ENCODE measurements at regions of chr6 and their contacts with region 1.

Region 1: GRCh38 chr6:33751771-33752645 is 5.3 kb upstream of the IP6K3 start:
- DNase-seq: no peak
- ATAC-seq: peak; percentile 27; the same call in 1 of the 2 replicates
- H3K4me3 ChIP-seq: no peak overlapping the region
- H3K27ac ChIP-seq: no peak overlapping the region
- H3K4me1 ChIP-seq: peaks cover 9% of the 10 kb centered on the region
- H3K27me3 ChIP-seq: no peaks in the 10 kb centered on the region
- CTCF ChIP-seq: no peak

Region 2: DNA sequence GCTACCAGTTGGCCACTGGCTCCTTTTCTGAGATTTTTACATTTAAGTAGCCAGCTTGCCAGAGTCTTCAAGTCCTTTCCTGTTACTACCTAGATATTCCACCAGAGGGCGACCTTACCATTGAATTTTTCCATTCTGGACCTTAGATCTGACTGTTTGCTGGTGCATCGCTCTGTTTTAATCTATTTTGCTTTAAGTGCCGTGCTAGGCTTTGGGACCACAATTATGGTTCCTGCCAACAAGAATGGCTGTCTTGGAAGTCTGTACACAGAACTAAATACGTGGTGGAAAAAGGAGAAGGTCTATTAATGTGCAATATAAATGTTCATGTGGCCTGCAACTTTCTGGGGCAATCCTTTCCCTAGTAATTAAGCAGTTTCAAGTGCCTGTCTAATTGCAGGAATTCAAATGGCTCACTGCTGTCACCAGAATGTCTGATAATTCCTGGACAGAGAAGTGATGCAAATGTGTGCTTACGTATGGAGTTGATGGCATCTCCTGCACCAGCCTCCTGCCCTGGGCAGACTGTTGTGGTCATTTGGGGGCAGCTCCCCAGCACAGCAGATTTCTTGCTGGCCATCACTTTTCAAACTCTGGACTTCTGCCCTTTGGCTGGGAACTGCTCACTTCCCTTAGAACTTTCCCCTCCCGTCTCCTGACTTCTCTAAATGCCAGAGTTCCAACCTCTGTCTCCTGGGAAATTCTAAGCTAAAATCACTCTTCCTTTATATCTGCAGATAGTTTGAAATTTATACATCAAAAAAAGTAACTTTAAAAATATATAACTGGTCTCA is 737.0 kb before region 1 on chr6:
- CTCF ChIA-PET with region 1: no interaction called
- POLR2A ChIA-PET with region 1: no interaction called
- in situ Hi-C with region 1: no loop called
- intact Hi-C with region 1: no loop called
- DNase-seq: peak; percentile 62
- ATAC-seq: peak; percentile 82
- H3K4me3 ChIP-seq: no peak overlapping the region
- H3K27ac ChIP-seq: no peak overlapping the region
- H3K4me1 ChIP-seq: no peaks in the 10 kb centered on the region
- H3K27me3 ChIP-seq: peaks cover 19% of the 10 kb centered on the region
- CTCF ChIP-seq: peak; percentile 84

Region 3: GRCh38 chr6:33792981-33793380 is 41.0 kb after region 1 on chr6:
- CTCF ChIA-PET with region 1: interaction called, 12 read pairs
- POLR2A ChIA-PET with region 1: no interaction called
- in situ Hi-C with region 1: no loop called
- intact Hi-C with region 1: no loop called
- DNase-seq: no peak
- ATAC-seq: no peak
- H3K4me3 ChIP-seq: no peak overlapping the region
- H3K27ac ChIP-seq: no peak overlapping the region
- H3K4me1 ChIP-seq: peaks cover 22% of the 10 kb centered on the region
- H3K27me3 ChIP-seq: no peaks in the 10 kb centered on the region
- CTCF ChIP-seq: no peak

Region 4: DNA sequence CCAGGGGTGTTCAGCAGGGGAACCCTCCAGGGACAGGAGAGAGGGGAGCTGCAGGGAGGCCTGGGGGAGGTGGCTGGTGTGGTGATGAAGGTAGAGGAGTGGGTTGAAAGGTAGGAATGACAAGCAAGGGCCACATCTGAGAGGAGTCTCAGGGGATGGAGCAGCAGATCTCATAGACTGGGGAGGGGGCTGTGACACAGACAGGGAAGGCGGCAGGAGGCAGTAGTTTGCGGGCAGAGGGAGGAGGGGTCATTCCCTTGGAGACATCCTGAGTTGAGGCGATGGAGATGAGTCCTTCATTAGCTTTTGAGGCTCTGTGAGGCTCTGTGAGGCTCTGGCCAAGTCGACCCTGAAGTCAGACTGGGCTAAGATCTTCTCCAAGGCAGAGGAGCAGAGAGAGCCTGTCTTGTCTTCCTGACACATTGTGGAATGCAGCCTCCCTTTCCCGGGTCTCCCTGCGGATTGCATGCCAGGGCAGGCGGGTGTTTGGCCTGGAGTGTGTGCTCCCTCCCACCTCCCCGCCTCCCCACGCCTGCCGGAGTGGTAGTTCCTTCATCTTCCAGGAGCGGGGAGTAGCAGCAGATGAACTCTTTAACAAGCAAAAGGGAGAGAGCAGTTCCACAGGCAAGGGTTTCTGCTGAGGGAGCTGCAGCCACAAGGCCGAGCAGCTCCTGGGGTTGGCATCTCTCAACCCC is 86.1 kb after region 1 on chr6:
- CTCF ChIA-PET with region 1: no interaction called
- POLR2A ChIA-PET with region 1: no interaction called
- in situ Hi-C with region 1: no loop called
- intact Hi-C with region 1: no loop called
- DNase-seq: no peak
- ATAC-seq: peak; percentile 37
- H3K4me3 ChIP-seq: no peak overlapping the region
- H3K27ac ChIP-seq: peak overlapping the region; percentile 88
- H3K4me1 ChIP-seq: peaks cover 53% of the 10 kb centered on the region
- H3K27me3 ChIP-seq: no peaks in the 10 kb centered on the region
- CTCF ChIP-seq: no peak

Region 5: GRCh38 chr6:34094474-34095135 is 342.6 kb after region 1 on chr6:
- CTCF ChIA-PET with region 1: no interaction called
- POLR2A ChIA-PET with region 1: no interaction called
- in situ Hi-C with region 1: no loop called
- intact Hi-C with region 1: no loop called
- DNase-seq: no peak
- ATAC-seq: no peak
- H3K4me3 ChIP-seq: no peak overlapping the region
- H3K27ac ChIP-seq: no peak overlapping the region
- H3K4me1 ChIP-seq: no peaks in the 10 kb centered on the region
- H3K27me3 ChIP-seq: no peaks in the 10 kb centered on the region
- CTCF ChIP-seq: no peak

Measured in Panc1 (cell line).